Right lobe of liver (tissue), 6 donors: ENCODE measurements at regions of chr13 and their contacts with region 1.

Region 1: GRCh38 chr13:31733066-31733465 is 6.3 kb upstream of the RXFP2 start:
- DNase-seq: no peak
- ATAC-seq: peak in 1 of 4 donors; percentile 29
- H3K4me3 ChIP-seq: no peak overlapping the region
- H3K27ac ChIP-seq: no peak overlapping the region
- H3K4me1 ChIP-seq: no peaks in the 10 kb centered on the region
- H3K27me3 ChIP-seq: peaks cover 0 to under 1% of the 10 kb centered on the region in 2 donors
- CTCF ChIP-seq: no peak
- POLR2A ChIP-seq: no peak

Region 2: DNA sequence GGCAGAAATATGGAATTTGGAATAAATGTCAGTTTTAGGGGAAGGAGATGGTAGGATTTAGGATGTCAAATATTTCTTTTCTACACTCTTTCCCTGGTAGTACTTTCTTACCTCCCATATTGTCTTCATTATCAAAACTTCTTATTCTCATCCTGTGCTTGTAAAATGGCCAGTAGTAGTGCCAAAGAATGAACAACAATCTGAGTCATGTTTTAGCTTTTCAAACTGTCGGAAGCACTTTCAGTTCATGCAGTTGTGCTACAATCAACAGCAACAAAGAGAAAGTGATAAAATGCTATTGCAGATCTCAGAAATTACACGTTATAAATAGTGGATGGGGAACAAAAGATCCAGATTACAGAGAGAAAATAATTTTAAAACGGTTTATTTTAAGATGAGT is 187.4 kb before region 1 on chr13:
- intact Hi-C with region 1: loop called in 1 of 2 experiments (anchors 10 kb)
- DNase-seq: no peak
- ATAC-seq: no peak
- H3K4me3 ChIP-seq: no peak overlapping the region
- H3K27ac ChIP-seq: no peak overlapping the region
- H3K4me1 ChIP-seq: no peaks in the 10 kb centered on the region
- H3K27me3 ChIP-seq: no peaks in the 10 kb centered on the region
- CTCF ChIP-seq: no peak
- POLR2A ChIP-seq: no peak